ENCODE measurements at regions of chr1 and their contacts with region 1.

Region 1: DNA sequence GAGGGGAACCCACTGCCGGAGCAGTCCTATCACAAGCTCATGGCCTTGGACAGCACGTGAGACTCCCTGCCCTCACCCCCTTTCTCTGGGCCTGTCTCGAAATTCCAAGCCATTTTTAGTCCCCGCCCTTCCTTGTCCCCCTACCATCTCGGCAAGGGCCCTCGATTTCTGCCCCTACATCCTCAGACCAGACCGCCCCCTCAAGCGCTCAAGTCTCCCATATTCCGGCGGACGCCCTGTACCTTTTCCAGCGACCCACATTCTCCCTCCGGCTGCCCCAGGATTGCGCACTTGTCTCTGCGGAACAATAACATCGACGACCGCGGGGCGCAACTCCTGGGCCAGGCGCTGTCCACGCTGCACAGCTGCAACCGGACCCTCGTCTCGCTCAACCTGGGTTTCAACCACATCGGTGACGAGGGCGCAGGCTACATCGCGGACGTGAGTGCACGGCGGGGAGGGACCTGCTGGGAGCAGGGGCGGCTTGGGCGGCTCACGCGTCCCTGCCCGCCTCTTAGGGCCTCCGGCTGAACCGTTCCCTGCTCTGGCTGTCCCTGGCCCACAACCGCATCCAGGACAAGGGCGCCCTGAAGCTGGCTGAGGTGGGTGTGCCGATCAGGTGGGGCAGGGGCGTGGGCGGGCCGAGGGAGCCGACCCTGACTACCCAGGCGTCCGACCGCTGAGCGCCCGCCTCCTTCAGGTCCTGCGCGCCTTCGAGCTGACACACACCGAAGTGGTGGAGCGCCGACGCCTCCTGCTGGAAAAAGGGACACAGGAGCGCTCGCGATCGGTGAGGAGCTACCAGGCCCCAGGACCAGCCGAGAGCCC is 7.0 kb downstream of the LRRC71 start:
- DNase-seq: peak; percentile 85
- H3K4me3 Mint-ChIP-seq: no peak overlapping the region
- H3K27ac Mint-ChIP-seq: no peak overlapping the region
- H3K4me1 Mint-ChIP-seq: peaks cover 22% of the 10 kb centered on the region
- H3K27me3 Mint-ChIP-seq: peaks cover 100% of the 10 kb centered on the region

Region 2: DNA sequence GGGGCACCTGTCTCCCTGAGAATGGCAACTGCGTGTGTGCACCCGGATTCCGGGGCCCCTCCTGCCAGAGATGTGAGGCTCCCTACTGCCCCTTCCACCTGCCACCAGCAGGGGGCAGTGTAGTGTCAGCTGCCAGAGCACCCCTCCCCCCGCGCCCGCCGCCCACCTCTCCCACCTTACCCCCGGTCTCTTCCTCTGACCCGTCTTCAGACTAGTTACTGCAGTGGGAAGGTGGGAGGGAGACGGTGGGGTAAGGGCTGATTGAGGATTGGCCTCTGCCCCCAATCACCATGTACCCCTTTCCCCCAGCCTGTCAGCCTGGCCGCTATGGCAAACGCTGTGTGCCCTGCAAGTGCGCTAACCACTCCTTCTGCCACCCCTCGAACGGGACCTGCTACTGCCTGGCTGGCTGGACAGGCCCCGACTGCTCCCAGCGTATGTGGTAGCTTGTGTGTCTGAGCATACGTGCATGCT is 17.1 kb before region 1 on chr1:
- CTCF ChIA-PET with region 1: interaction called, 61 read pairs
- DNase-seq: peak; percentile 75
- H3K4me3 Mint-ChIP-seq: no peak overlapping the region
- H3K27ac Mint-ChIP-seq: peak overlapping the region; percentile 45
- H3K4me1 Mint-ChIP-seq: no peaks in the 10 kb centered on the region
- H3K27me3 Mint-ChIP-seq: peaks cover 69% of the 10 kb centered on the region

Region 3: GRCh38 chr1:157056269-157056668 is 128.8 kb after region 1 on chr1:
- CTCF ChIA-PET with region 1: no interaction called
- DNase-seq: no peak
- H3K4me3 Mint-ChIP-seq: no peak overlapping the region
- H3K27ac Mint-ChIP-seq: no peak overlapping the region
- H3K4me1 Mint-ChIP-seq: no peaks in the 10 kb centered on the region
- H3K27me3 Mint-ChIP-seq: peaks cover 55% of the 10 kb centered on the region